ENCODE measurements at regions of chr21 and their contacts with region 1.

Region 1: DNA sequence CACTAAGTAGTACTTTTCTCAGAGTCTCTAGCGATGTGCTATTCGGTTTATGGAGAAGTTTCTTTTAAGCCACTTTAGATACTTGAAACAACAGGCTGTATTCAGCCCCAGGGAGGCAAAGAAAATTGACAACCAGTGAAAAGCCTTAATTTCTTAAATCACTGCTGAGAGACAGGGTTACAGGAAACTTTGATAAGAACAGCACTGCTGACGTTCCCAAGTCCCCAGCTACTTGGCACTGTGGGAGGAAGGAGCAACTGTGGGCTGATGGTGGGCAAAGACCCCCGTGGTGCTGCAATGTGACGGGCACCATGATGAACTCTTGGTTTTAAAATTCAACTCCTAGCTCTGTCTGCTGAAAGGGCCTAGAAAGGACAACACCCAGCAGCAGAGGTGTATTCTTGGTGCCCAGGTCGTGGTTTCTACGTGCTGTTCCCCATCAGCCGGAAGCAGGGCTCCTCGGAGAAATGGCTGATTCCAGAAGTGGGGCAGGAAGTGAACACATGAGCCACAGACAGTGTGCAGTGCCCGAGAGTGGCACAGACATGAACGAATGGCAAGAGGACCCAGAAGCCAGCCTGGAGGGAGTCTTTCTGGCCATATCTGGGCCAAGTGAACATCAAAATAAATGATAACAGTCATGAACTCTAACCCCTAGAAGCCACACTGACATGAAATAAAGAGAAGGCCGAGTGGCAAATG is 5.3 kb downstream of the PTTG1IP start:
- DNase-seq: peak; percentile 56
- H3K4me3 Mint-ChIP-seq: peak overlapping the region; percentile 58
- H3K27ac Mint-ChIP-seq: peak overlapping the region; percentile 88
- H3K4me1 Mint-ChIP-seq: peaks cover 75% of the 10 kb centered on the region
- H3K27me3 Mint-ChIP-seq: no peaks in the 10 kb centered on the region

Region 2: GRCh38 chr21:44854664-44855446 is 13.3 kb before region 1 on chr21:
- intact Hi-C with region 1: loop called (anchors 1 kb)
- DNase-seq: no peak
- H3K4me3 Mint-ChIP-seq: no peak overlapping the region
- H3K27ac Mint-ChIP-seq: peak overlapping the region; percentile 43
- H3K4me1 Mint-ChIP-seq: peaks cover 31% of the 10 kb centered on the region
- H3K27me3 Mint-ChIP-seq: no peaks in the 10 kb centered on the region

Region 3: DNA sequence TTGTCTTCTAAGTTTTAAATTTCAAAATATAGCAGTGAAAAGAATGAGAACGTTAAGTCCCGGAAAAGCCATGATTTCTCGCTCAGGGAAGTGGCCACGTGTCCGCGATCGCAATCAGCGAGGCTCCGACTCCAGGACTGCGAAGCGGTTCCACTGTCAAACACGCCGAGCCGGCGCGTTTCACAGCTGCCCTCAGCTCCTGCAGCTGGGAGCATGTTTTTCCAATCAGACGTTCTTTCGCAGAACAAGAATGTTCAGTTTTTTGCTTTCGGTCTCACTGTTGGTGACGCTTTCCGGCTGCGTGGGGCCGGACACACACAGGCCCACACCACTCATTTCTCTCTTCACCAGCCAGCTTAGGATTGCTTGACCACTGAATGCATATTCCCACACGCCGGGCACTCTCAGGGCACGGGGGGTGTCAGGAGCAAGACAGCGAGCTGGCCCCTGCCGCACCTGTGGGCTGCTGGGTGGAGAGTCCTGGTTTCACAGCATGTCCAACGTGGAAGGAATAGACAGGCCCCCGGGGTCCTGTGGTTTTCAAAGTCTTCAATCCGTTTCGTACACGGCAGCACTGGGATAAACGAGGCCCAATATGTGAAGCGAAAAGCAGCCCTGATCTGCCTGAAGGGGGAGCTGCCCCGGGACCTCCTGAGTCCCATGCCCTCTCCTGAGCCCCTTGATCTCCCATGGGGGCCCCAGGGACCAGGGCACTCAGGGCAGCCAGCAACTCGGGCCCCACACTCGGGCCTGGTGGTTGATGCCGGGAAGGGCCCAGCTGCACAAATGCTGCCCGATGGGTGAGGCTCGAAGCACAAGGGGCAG is 489.5 kb after region 1 on chr21:
- intact Hi-C with region 1: no loop called
- DNase-seq: no peak
- H3K4me3 Mint-ChIP-seq: no peak overlapping the region
- H3K27ac Mint-ChIP-seq: no peak overlapping the region
- H3K4me1 Mint-ChIP-seq: peaks cover 7% of the 10 kb centered on the region
- H3K27me3 Mint-ChIP-seq: peaks cover 22% of the 10 kb centered on the region